ENCODE measurements at regions of chr7 and their contacts with region 1.

Region 1: GRCh38 chr7:83410989-83411591 is 237.8 kb downstream of the SEMA3E start:
- DNase-seq: no peak
- ATAC-seq: no peak
- H3K4me3 ChIP-seq: no peak overlapping the region
- H3K27ac ChIP-seq: no peak overlapping the region
- H3K4me1 ChIP-seq: no peaks in the 10 kb centered on the region
- H3K27me3 ChIP-seq: peaks cover 0 to 9% (median 0%) of the 10 kb centered on the region in 9 donors
- CTCF ChIP-seq: peak; percentile 20 to 70 (median 56)
- POLR2A ChIP-seq: no peak

Region 2: GRCh38 chr7:83365746-83366145 is 45.3 kb before region 1 on chr7:
- intact Hi-C with region 1: no loop called
- DNase-seq: no peak
- ATAC-seq: no peak
- H3K4me3 ChIP-seq: no peak overlapping the region
- H3K27ac ChIP-seq: no peak overlapping the region
- H3K4me1 ChIP-seq: no peaks in the 10 kb centered on the region
- H3K27me3 ChIP-seq: no peaks in the 10 kb centered on the region
- CTCF ChIP-seq: peak in 3 of 12 donors; percentile 18 to 29 (median 25)
- POLR2A ChIP-seq: no peak

Region 3: DNA sequence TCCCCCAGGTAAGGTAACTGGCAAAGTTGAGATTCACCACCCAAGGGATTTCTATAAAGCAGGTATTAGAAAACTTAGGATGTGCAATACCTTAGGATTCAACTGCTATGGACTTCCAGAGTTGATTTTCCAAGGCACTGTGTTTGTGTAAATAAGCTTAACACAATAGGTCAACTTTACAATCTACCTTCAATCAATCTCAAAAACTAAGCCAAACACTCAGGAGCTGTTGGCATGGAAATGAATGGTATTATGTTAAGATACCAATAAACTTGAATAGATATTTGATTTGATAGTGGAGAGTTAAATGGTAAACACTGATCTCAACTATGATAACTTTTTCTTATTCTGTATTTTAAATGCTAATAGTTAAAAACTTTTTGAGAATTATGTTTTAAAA is 238.6 kb after region 1 on chr7:
- intact Hi-C with region 1: loop called in 4 of 10 experiments (anchors 2 to 10 kb)
- DNase-seq: no peak
- ATAC-seq: no peak
- H3K4me3 ChIP-seq: no peak overlapping the region
- H3K27ac ChIP-seq: no peak overlapping the region
- H3K4me1 ChIP-seq: peaks cover 0 to 2% (median 0%) of the 10 kb centered on the region in 12 donors
- H3K27me3 ChIP-seq: peaks cover 0 to 18% (median 0%) of the 10 kb centered on the region in 9 donors
- CTCF ChIP-seq: no peak
- POLR2A ChIP-seq: no peak

Region 4: GRCh38 chr7:83655951-83656556 is 245.0 kb after region 1 on chr7:
- intact Hi-C with region 1: loop called (anchors 2 to 10 kb)
- DNase-seq: no peak
- ATAC-seq: peak in 1 of 4 donors; percentile 41
- H3K4me3 ChIP-seq: no peak overlapping the region
- H3K27ac ChIP-seq: no peak overlapping the region
- H3K4me1 ChIP-seq: no peaks in the 10 kb centered on the region
- H3K27me3 ChIP-seq: no peaks in the 10 kb centered on the region
- CTCF ChIP-seq: peak; percentile 38 to 69 (median 56)
- POLR2A ChIP-seq: no peak

Measured in heart left ventricle (tissue), 16 donors.